Adrenal gland (tissue), 19 donors: ENCODE measurements at regions of chr18 and their contacts with region 1.

Region 1: DNA sequence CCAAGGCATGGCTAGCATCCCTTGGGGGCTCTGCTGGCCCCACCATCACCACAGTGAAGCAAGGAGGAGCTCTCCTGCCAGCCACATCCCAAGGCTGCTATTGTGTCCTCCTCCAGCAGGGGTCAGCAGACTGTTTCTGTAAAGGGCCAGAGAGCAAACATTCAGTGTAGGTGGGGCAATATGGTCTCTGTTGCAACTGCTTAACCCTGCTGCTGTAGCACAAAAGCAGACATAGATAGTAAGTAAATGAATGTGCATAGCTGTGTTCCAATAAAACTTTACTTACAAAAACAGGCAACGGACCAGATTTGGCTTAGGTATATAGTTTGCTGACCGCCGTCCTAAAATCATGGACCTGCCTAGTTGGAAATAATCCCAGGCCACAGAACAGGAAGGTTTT is 36.4 kb upstream of the ZBTB7C start:
- DNase-seq: peak; percentile 75 to 93 (median 85)
- H3K4me3 ChIP-seq: no peak overlapping the region
- H3K27ac ChIP-seq: no peak overlapping the region
- H3K4me1 ChIP-seq: peaks cover 0 to 4% of the 10 kb centered on the region in 2 donors
- H3K27me3 ChIP-seq: no peaks in the 10 kb centered on the region
- CTCF ChIP-seq: peak; percentile 75 to 92 (median 88)
- POLR2A ChIP-seq: no peak

Region 2: GRCh38 chr18:48022531-48023329 is 422.8 kb before region 1 on chr18:
- intact Hi-C with region 1: loop called (anchors 5 kb)
- DNase-seq: peak in 4 of 7 donors; percentile 53 to 62 (median 56)
- H3K4me3 ChIP-seq: no peak overlapping the region
- H3K27ac ChIP-seq: peak overlapping the region in 4 of 5 donors; percentile 51 to 75 (median 66)
- H3K4me1 ChIP-seq: peaks cover 24 to 35% of the 10 kb centered on the region in 2 donors
- H3K27me3 ChIP-seq: no peaks in the 10 kb centered on the region
- CTCF ChIP-seq: peak; percentile 47 to 77 (median 65)
- POLR2A ChIP-seq: no peak

Region 3: GRCh38 chr18:48136531-48137332 is 308.8 kb before region 1 on chr18:
- intact Hi-C with region 1: loop called in 1 of 2 experiments (anchors 10 kb)
- DNase-seq: peak in 2 of 7 donors; percentile 15 to 38
- H3K4me3 ChIP-seq: peak overlapping the region in 2 of 4 donors; percentile 28 to 58
- H3K27ac ChIP-seq: peak overlapping the region in 2 of 5 donors; percentile 43 to 60
- H3K4me1 ChIP-seq: peaks cover 27 to 42% of the 10 kb centered on the region in 2 donors
- H3K27me3 ChIP-seq: no peaks in the 10 kb centered on the region
- CTCF ChIP-seq: no peak
- POLR2A ChIP-seq: peak in 1 of 2 donors; percentile 9

Region 4: GRCh38 chr18:48230467-48231113 is 214.9 kb before region 1 on chr18:
- intact Hi-C with region 1: loop called (anchors 5 to 10 kb)
- DNase-seq: peak; percentile 72 to 91 (median 85)
- H3K4me3 ChIP-seq: no peak overlapping the region
- H3K27ac ChIP-seq: peak overlapping the region in 2 of 5 donors; percentile 61 to 65
- H3K4me1 ChIP-seq: peaks cover 25 to 38% of the 10 kb centered on the region in 2 donors
- H3K27me3 ChIP-seq: no peaks in the 10 kb centered on the region
- CTCF ChIP-seq: peak; percentile 40 to 86 (median 69)
- POLR2A ChIP-seq: no peak